GM10248 (cell line): ENCODE measurements at regions of chr1 and their contacts with region 1.

Region 1: GRCh38 chr1:206106328-206107167 is 10.6 kb downstream of the AVPR1B start:
- DNase-seq: peak; percentile 86
- CTCF ChIP-seq: peak; percentile 85

Region 2: DNA sequence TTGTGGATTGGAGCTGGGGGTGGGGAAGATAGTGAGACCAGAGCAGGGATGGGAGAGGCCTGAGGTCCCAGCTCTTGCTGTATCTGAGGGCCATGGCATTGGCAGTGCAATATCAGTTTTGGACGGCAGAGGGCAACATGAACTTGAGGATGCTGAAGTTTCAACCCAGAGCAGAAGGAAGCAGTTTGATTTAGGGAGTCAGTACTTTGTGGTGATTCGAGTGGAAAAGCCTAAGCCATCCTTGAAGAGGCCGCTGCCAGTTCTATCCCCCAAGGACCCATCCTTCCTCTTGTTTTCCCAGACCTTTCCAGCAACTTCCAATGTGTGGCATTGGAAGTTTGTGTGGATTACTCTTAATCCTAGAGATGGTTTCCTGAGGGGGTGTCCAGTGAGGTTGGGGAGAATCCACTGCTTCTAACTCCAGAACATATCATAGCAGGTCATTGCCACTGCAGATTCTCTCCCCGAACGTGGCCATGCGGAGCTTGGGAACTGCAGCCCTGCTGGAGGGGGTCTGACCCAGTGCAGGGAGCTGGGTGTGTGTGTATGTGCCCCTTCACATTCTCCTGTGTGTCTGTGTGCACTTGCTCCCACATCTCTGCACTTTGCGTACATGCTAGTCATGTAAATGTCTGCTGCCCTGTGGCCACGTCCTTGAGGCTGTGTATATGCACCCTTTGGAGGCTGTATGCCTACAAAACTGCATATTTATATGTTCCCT is 187.4 kb before region 1 on chr1:
- CTCF ChIA-PET with region 1: interaction called, 24 read pairs
- POLR2A ChIA-PET with region 1: no interaction called
- DNase-seq: peak; percentile 78
- CTCF ChIP-seq: peak; percentile 94

Region 3: GRCh38 chr1:206021626-206022365 is 84.8 kb before region 1 on chr1:
- CTCF ChIA-PET with region 1: interaction called, 22 read pairs
- POLR2A ChIA-PET with region 1: no interaction called
- DNase-seq: no peak
- CTCF ChIP-seq: no peak

Region 4: DNA sequence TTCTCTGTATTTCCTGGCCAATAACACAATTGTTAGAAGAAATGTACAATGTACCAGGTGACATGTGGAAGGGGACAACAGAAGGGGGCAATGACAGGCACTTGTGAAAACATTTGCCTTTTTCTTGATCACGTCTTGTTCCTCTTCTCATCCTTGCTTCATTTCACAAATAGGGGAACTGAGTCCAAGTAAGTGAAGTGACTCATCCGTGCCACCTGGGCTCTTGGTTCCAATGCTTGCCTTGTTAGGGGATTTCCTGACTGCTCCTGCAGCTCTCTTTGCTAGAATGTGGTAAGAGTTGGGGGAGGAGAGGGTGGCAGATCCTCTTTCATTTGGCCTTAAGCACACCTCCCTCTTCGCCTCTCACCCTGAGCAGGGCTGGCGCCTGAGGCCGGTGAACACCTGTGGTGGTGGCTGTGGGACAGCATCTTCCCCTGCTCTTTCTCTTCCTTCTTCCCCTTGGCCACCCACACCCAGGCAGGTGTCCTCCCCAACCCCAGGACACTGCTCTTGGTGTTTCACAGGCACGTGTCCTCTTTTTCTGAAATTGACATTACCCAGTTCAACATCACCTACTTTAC is 55.8 kb before region 1 on chr1:
- CTCF ChIA-PET with region 1: interaction called, 12 read pairs
- POLR2A ChIA-PET with region 1: no interaction called
- DNase-seq: peak; percentile 63
- CTCF ChIP-seq: no peak

Region 5: GRCh38 chr1:206059355-206059915 is 47.1 kb before region 1 on chr1:
- CTCF ChIA-PET with region 1: interaction called, 15 read pairs
- POLR2A ChIA-PET with region 1: no interaction called
- DNase-seq: no peak
- CTCF ChIP-seq: no peak

Region 6: DNA sequence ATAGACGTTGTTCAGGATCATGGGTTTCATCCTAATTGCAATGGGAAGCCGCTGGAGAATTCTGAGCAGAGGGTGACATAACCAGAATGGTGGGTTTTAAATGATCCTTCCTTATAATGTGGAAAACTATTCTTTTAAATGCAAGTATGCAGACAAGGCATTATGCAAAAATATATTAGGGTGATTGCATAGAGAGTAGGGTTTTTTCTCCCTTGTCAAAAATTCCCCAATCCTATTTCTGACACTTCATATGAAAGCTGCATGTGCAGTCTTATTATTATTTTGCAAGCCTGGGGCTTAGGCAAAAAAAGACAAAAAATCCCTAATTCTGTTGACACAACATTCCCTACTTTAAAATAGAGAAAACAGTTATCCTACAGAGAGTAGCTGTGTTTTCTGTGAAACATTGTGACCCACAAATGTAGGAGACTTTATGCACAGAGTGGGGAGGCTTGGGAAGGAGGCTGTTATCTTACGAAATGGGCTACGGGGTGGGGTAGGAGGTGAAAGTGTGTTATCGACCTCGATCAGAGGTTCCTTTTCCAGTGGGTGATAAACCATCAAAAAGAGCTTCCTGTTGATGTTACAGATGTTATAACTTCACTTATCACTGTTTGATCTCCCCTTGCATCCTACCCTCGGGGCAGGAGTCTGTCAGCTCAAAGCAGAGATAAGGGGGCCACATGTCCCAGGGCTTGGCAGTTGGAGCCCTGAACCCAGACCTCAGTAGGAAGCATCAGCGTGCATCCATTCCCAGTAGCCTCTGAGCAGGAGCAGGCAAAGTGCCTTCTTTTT is 26.3 kb before region 1 on chr1:
- CTCF ChIA-PET with region 1: interaction called, 13 read pairs
- POLR2A ChIA-PET with region 1: no interaction called
- DNase-seq: no peak
- CTCF ChIP-seq: no peak

Region 7: GRCh38 chr1:206094024-206094423 is 12.5 kb before region 1 on chr1:
- CTCF ChIA-PET with region 1: interaction called, 24 read pairs
- POLR2A ChIA-PET with region 1: no interaction called
- DNase-seq: no peak
- CTCF ChIP-seq: no peak

Region 8: GRCh38 chr1:206143537-206144172 is 37.1 kb after region 1 on chr1:
- CTCF ChIA-PET with region 1: no interaction called
- POLR2A ChIA-PET with region 1: no interaction called
- DNase-seq: no peak
- CTCF ChIP-seq: no peak